CD14-positive monocyte (primary cell): ENCODE measurements at regions of chr2 and their contacts with region 1.

Region 1: GRCh38 chr2:27032495-27033252 is at the start of gene TMEM214:
- DNase-seq: peak; percentile 71 to 79 (median 75)
- H3K4me3 ChIP-seq: peak within 1 kb of the TSS; percentile 84 to 96 (median 94)
- H3K4me3 Mint-ChIP-seq: peak within 1 kb of the TSS; percentile 92 to 96
- H3K27ac ChIP-seq: peak within 1 kb of the TSS; percentile 27 to 87
- H3K27ac Mint-ChIP-seq: peak within 1 kb of the TSS; percentile 72 to 92 (median 83)
- H3K4me1 ChIP-seq: peaks cover 20 to 24% of the 10 kb centered on the region in 2 donors
- H3K4me1 Mint-ChIP-seq: peaks cover 31% of the 10 kb centered on the region
- H3K27me3 ChIP-seq: no peaks in the 10 kb centered on the region
- H3K27me3 Mint-ChIP-seq: no peaks in the 10 kb centered on the region
- CTCF ChIP-seq: no peak
- polyA plus RNA-seq, gene TMEM214: 18.3 to 61.7 (median 26.9) TPM

Region 2: GRCh38 chr2:26993768-26994167 is 38.9 kb before region 1 on chr2:
- intact Hi-C with region 1: no loop called
- DNase-seq: no peak
- H3K4me3 ChIP-seq: no peak overlapping the region
- H3K4me3 Mint-ChIP-seq: no peak overlapping the region
- H3K27ac ChIP-seq: no peak overlapping the region
- H3K27ac Mint-ChIP-seq: no peak overlapping the region
- H3K4me1 ChIP-seq: no peaks in the 10 kb centered on the region
- H3K4me1 Mint-ChIP-seq: no peaks in the 10 kb centered on the region
- H3K27me3 ChIP-seq: no peaks in the 10 kb centered on the region
- H3K27me3 Mint-ChIP-seq: peaks cover 5 to 8% (median 6%) of the 10 kb centered on the region in 3 donors
- CTCF ChIP-seq: no peak

Region 3: GRCh38 chr2:27071277-27071989 is 38.8 kb after region 1 on chr2 and contains the start of gene OST4:
- intact Hi-C with region 1: loop called (anchors 5 kb)
- DNase-seq: peak; percentile 84 to 93 (median 86)
- H3K4me3 ChIP-seq: peak within 1 kb of the TSS; percentile 91 to 97 (median 95)
- H3K4me3 Mint-ChIP-seq: peak within 1 kb of the TSS; percentile 94 to 95
- H3K27ac ChIP-seq: peak within 1 kb of the TSS; percentile 86 to 96
- H3K27ac Mint-ChIP-seq: peak within 1 kb of the TSS; percentile 92 to 98 (median 96)
- H3K4me1 ChIP-seq: peaks cover 41 to 49% of the 10 kb centered on the region in 2 donors
- H3K4me1 Mint-ChIP-seq: peaks cover 57% of the 10 kb centered on the region
- H3K27me3 ChIP-seq: no peaks in the 10 kb centered on the region
- H3K27me3 Mint-ChIP-seq: no peaks in the 10 kb centered on the region
- CTCF ChIP-seq: no peak
- polyA plus RNA-seq, gene OST4: 209 to 635 (median 615) TPM

Region 4: DNA sequence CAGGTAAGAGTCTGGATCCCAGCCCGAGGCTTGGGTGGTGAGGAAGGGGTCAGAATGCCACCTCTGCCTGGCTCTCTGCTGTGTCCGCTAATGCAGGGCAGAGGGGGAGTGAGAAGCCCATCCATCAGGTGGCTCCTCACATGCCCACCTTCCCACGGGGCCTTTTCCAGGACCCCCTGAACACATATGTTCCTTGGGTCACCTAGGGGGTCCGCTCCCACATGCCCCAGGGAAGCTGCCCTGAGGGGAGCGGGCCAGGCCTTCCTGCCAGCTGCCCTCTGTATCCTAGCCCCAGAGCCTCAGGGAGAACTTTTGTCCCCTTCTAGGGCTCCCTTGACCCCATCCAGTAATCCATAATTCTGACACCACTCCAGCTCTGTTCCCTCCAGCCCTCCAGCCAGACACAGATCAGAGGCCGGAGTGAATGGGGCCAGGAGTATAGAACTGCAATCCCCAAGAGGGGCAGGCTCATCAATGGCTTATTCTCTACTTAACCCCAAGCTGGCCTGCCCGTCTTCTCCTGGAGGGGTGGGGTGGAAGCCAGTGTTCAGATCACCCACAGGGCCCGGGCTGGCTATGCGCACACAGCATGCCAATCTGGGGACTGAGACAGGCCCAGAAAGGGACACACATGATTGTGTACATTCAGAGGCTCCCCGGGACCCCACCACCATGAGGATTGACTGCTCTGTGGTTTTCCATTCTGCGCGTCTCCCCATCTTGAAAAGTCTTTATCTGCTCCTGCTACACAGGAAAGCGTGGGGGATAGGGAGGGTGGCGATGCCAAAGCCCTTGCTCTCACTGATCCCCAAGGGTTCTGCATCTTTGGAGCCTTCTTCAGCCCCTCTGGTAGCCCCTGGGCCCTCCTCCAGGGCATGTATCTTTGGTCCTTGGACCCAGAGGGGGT is 46.8 kb after region 1 on chr2:
- intact Hi-C with region 1: loop called (anchors 2 to 5 kb)
- DNase-seq: no peak
- H3K4me3 ChIP-seq: peak overlapping the region in 2 of 3 experiments; percentile 19 to 56
- H3K4me3 Mint-ChIP-seq: peak overlapping the region in 1 of 2 donors; percentile 20
- H3K27ac ChIP-seq: no peak overlapping the region
- H3K27ac Mint-ChIP-seq: no peak overlapping the region
- H3K4me1 ChIP-seq: peaks cover 52 to 56% of the 10 kb centered on the region in 2 donors
- H3K4me1 Mint-ChIP-seq: peaks cover 58% of the 10 kb centered on the region
- H3K27me3 ChIP-seq: no peaks in the 10 kb centered on the region
- H3K27me3 Mint-ChIP-seq: peaks cover 0 to 7% (median 0%) of the 10 kb centered on the region in 3 donors
- CTCF ChIP-seq: no peak